ENCODE measurements at regions of chr15 and their contacts with region 1.

Region 1: GRCh38 chr15:38084289-38084688 is 149.8 kb downstream of the TMCO5A start:
- DNase-seq: no peak
- H3K4me3 Mint-ChIP-seq: no peak overlapping the region
- H3K27ac Mint-ChIP-seq: no peak overlapping the region
- H3K4me1 Mint-ChIP-seq: peaks cover 11% of the 10 kb centered on the region
- H3K27me3 Mint-ChIP-seq: peaks cover 46% of the 10 kb centered on the region

Region 2: DNA sequence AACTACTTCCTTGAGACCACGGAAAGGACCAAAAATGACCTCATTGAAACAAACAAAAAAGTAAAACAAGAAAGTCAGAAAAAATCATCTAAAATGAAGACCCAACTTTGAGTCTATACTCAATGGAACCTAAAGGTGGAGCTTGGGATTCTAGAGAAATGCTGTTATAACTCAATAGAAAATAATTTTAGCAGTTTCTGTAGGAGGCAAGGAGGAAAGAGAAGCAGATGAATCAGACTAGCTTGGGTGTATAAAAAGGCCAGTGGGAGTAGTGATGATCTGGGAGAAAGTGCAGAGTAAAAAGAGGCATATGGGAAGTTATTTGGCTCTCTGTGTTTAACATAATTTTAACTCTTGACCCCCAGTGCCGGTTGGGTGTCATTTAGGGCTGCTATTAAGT is 55.4 kb before region 1 on chr15:
- intact Hi-C with region 1: no loop called
- DNase-seq: no peak
- H3K4me3 Mint-ChIP-seq: no peak overlapping the region
- H3K27ac Mint-ChIP-seq: no peak overlapping the region
- H3K4me1 Mint-ChIP-seq: no peaks in the 10 kb centered on the region
- H3K27me3 Mint-ChIP-seq: no peaks in the 10 kb centered on the region

Region 3: DNA sequence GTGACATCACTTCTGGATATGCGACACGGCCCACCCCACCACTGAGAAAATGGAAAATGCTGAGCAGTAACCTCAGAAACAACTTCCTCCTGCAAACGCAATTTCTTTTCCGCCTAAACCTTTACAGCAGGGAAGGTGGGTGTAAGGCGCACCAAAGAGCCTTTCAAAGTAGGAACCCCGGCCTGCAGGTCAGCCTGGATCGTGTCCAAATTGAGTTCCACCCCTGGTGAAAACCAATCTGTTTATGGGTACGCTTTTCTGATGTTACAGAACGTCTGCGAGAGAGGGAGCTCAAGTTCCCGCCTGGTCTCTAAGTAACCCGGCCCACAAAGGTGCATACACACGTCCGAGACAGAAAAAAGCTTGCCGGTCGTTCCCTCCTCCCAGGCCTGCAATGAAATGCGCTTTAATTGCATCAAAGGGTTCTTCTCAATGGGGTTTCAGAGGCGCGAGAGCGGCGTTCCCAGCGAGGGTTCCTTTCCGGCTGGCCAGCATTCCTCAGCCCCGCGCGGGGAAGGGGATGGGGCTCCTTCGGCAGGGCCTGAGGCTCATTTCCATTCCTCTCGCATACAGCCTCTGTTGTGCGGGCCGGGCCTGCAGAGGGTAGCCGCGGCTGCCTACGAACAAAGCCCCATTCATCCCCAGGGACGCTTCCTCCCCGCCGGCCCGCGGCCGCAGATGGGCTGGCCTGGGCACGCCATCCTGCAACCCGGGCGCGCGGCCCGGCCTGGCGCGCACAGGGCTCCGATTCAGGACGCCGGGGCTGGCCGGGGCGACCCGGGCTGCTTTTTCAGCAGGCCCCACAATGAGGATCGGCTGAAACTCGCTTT is 11.7 kb before region 1 on chr15:
- intact Hi-C with region 1: loop called (anchors 1 kb)
- DNase-seq: peak; percentile 11
- H3K4me3 Mint-ChIP-seq: peak overlapping the region; percentile 50
- H3K27ac Mint-ChIP-seq: no peak overlapping the region
- H3K4me1 Mint-ChIP-seq: peaks cover 28% of the 10 kb centered on the region
- H3K27me3 Mint-ChIP-seq: peaks cover 83% of the 10 kb centered on the region

Measured in activated T-helper 2 cell treated with anti-CD3 and anti-CD28 coated beads, Interferon-gamma antibody, Interleukin-2, Interleukin-4, amounts not matched to agents 10 μg/mL and 5 μg/mL and 100 μg/mL, durations not matched to agents 14 hours and 24 hours and 36 hours (primary cell).